Body of pancreas (tissue), 4 donors: ENCODE measurements at regions of chr15 and their contacts with region 1.

Region 1: GRCh38 chr15:27679731-27680471 is 419.2 kb downstream of the OCA2 start:
- DNase-seq: no peak
- ATAC-seq: no peak
- H3K4me3 ChIP-seq: no peak overlapping the region
- H3K27ac ChIP-seq: no peak overlapping the region
- H3K4me1 ChIP-seq: no peaks in the 10 kb centered on the region
- H3K27me3 ChIP-seq: no peaks in the 10 kb centered on the region
- CTCF ChIP-seq: no peak
- POLR2A ChIP-seq: no peak

Region 2: DNA sequence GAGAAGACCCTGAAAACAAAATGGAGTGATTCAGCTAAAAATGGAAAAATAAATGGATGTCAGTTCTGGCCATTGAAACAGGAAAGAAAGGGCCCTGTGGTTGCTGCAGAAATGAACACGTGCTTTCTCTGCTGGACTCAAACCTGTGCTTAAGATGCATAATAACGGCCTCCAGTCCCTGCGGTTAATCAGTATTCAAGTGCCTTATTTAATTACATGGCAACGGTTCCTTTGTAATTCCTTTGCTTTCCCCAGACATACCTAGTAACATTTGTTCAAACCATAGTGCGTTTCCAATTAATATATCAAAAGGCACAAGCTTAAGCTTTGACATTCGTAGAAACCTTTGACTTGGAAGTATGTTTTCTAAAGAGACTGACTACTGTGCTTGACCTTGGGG is 280.7 kb before region 1 on chr15:
- intact Hi-C with region 1: no loop called
- DNase-seq: no peak
- ATAC-seq: no peak
- H3K4me3 ChIP-seq: no peak overlapping the region
- H3K27ac ChIP-seq: no peak overlapping the region
- H3K4me1 ChIP-seq: no peaks in the 10 kb centered on the region
- H3K27me3 ChIP-seq: no peaks in the 10 kb centered on the region
- CTCF ChIP-seq: no peak
- POLR2A ChIP-seq: no peak

Region 3: GRCh38 chr15:27619204-27619603 is 60.7 kb before region 1 on chr15:
- intact Hi-C with region 1: loop called (anchors 10 kb)
- DNase-seq: no peak
- ATAC-seq: no peak
- H3K4me3 ChIP-seq: no peak overlapping the region
- H3K27ac ChIP-seq: no peak overlapping the region
- H3K4me1 ChIP-seq: no peaks in the 10 kb centered on the region
- H3K27me3 ChIP-seq: no peaks in the 10 kb centered on the region
- CTCF ChIP-seq: no peak
- POLR2A ChIP-seq: no peak

Region 4: DNA sequence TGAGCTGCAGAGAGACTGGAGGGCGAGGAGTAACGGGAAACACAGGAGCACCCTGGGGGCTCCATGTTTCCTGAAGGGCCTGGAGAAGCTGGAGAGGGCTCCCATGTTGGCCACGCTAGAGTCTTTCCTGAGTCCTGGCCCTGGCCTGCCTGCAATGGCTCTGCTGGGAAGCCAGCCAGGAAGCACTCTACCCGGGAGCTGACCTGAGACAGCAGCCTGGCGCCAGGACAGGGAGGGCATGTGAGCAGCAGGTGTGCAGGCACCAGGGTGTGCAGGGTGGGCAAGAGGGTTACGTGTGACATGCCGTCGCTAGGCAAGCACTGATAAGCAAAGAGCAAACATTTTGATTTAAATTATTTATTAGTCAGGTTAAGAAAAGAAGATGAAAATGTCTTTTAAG is 117.9 kb after region 1 on chr15:
- intact Hi-C with region 1: no loop called
- DNase-seq: peak in 2 of 4 donors; percentile 33 to 61
- ATAC-seq: no peak
- H3K4me3 ChIP-seq: no peak overlapping the region
- H3K27ac ChIP-seq: no peak overlapping the region
- H3K4me1 ChIP-seq: no peaks in the 10 kb centered on the region
- H3K27me3 ChIP-seq: no peaks in the 10 kb centered on the region
- CTCF ChIP-seq: no peak
- POLR2A ChIP-seq: no peak